Activated T-helper 2 cell treated with anti-CD3 and anti-CD28 coated beads, Interferon-gamma antibody, Interleukin-2, Interleukin-4, amounts not matched to agents 10 μg/mL and 5 μg/mL and 100 μg/mL, durations not matched to agents 14 hours and 24 hours and 36 hours (primary cell): ENCODE measurements at regions of chr1 and their contacts with region 1.

Region 1: GRCh38 chr1:243255791-243256512 is at the start of gene SDCCAG8:
- DNase-seq: peak; percentile 94
- H3K4me3 Mint-ChIP-seq: peak within 1 kb of the TSS; percentile 97
- H3K27ac Mint-ChIP-seq: peak within 1 kb of the TSS; percentile 100
- H3K4me1 Mint-ChIP-seq: peaks cover 20% of the 10 kb centered on the region
- H3K27me3 Mint-ChIP-seq: no peaks in the 10 kb centered on the region
- total RNA-seq, gene SDCCAG8: 18.1 and 25.4 TPM in 2 replicates

Region 2: GRCh38 chr1:241847796-241848685 is 1407.9 kb before region 1 on chr1 and contains the start of gene EXO1:
- intact Hi-C with region 1: loop called (anchors 5 kb)
- DNase-seq: peak; percentile 86
- H3K4me3 Mint-ChIP-seq: peak within 1 kb of the TSS; percentile 98
- H3K27ac Mint-ChIP-seq: peak within 1 kb of the TSS; percentile 100
- H3K4me1 Mint-ChIP-seq: peaks cover 26% of the 10 kb centered on the region
- H3K27me3 Mint-ChIP-seq: peaks cover 7% of the 10 kb centered on the region
- total RNA-seq, gene EXO1: 49.2 and 52.5 TPM in 2 replicates

Region 3: GRCh38 chr1:243179714-243180113 is 76.2 kb before region 1 on chr1:
- intact Hi-C with region 1: loop called (anchors 10 kb)
- DNase-seq: no peak
- H3K4me3 Mint-ChIP-seq: no peak overlapping the region
- H3K27ac Mint-ChIP-seq: peak overlapping the region; percentile 48
- H3K4me1 Mint-ChIP-seq: peaks cover 16% of the 10 kb centered on the region
- H3K27me3 Mint-ChIP-seq: no peaks in the 10 kb centered on the region

Region 4: DNA sequence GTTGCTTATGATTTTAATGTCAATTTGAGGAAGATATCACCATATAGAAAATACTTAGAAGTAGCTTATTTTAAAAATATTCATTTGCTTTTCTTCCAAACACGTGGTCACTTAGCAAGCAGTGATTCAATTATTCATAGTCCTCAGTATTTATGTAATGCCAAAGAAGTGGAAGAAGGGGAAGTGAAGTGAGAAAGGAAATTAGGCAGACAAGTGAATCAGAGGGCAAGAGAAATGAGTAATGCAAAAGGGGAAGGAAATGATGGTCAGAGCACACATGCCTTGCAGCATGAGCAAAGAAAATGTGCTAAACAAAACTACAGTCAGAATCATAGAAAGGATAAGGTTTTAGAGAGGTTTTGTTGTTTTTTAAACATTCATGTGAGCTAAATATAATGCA is 31.7 kb after region 1 on chr1:
- intact Hi-C with region 1: loop called (anchors 1 kb)
- DNase-seq: no peak
- H3K4me3 Mint-ChIP-seq: no peak overlapping the region
- H3K27ac Mint-ChIP-seq: peak overlapping the region; percentile 72
- H3K4me1 Mint-ChIP-seq: peaks cover 25% of the 10 kb centered on the region
- H3K27me3 Mint-ChIP-seq: no peaks in the 10 kb centered on the region

Region 5: DNA sequence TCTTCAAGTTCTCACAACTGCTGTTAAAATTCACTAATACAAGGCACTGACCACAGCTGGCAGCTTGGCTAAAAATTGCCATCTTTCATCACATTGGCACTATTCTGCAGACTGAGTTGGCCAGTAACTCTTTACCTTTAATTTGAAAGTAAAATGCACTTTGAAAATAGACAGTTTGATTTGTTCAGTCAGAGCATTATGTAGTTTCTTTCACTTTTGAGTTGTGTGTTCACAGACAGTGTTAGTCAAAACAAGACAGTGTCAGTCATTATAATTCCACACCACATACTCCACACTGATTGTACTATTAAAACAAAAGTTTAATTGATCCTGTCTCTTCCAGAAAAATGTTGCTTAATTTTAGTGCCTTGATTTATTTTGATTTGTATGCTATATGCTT is 160.5 kb after region 1 on chr1:
- intact Hi-C with region 1: loop called (anchors 2 kb)
- DNase-seq: no peak
- H3K4me3 Mint-ChIP-seq: peak overlapping the region; percentile 40
- H3K27ac Mint-ChIP-seq: peak overlapping the region; percentile 65
- H3K4me1 Mint-ChIP-seq: peaks cover 63% of the 10 kb centered on the region
- H3K27me3 Mint-ChIP-seq: no peaks in the 10 kb centered on the region

Region 6: DNA sequence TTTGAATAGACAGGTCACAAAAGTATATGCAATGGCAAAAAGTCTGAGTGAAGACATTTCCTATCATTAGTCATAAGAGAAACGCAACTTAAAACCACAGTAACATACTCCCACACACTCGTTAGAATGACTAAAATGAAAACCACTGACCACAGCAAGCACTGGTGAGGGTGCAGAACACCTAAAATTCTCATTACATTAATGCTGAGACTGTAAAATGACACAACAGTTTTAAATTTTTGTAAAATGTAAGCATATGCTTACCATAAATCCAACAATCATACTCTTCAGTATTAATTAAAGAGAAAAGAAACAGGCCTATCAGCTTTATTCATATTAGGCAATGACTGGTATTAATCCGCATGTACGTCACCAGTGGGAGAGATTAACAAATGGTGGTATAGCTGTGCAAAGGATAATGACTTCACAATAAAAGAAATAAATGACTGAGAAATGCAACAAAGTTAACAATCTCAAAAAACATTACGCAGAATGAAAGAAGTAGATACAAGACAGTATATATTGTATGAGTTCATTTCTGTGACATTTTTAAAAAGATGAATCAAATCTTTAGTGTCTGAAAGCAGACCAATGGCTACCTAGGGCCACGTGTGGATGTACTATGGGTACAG is 340.6 kb after region 1 on chr1:
- intact Hi-C with region 1: loop called (anchors 10 kb)
- DNase-seq: no peak
- H3K4me3 Mint-ChIP-seq: peak overlapping the region; percentile 57
- H3K27ac Mint-ChIP-seq: peak overlapping the region; percentile 86
- H3K4me1 Mint-ChIP-seq: peaks cover 48% of the 10 kb centered on the region
- H3K27me3 Mint-ChIP-seq: no peaks in the 10 kb centered on the region

Region 7: DNA sequence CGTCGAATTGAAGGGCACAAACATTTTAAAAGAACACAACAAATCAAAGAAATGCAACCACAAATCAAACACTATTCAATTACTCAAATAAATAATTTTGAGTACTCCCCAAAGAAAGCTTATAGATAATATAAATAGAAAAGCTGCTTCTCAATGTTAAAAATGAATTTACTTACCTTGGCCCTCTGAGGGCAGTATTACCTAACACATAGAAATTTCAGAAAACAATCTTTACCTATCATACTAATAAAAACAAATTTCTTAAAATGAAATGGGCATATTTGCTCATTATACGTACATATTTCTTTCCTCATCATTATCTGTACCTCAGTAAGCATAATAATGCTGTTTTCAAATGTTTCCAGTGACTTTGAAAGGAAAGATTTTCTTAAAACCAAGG is 452.3 kb after region 1 on chr1:
- intact Hi-C with region 1: no loop called
- DNase-seq: no peak
- H3K4me3 Mint-ChIP-seq: no peak overlapping the region
- H3K27ac Mint-ChIP-seq: no peak overlapping the region
- H3K4me1 Mint-ChIP-seq: peaks cover 8% of the 10 kb centered on the region
- H3K27me3 Mint-ChIP-seq: no peaks in the 10 kb centered on the region

Region 8: GRCh38 chr1:244451951-244452795 is 1196.2 kb after region 1 on chr1:
- intact Hi-C with region 1: loop called (anchors 1 kb)
- DNase-seq: peak; percentile 98
- H3K4me3 Mint-ChIP-seq: peak overlapping the region; percentile 95
- H3K27ac Mint-ChIP-seq: peak overlapping the region; percentile 96
- H3K4me1 Mint-ChIP-seq: peaks cover 34% of the 10 kb centered on the region
- H3K27me3 Mint-ChIP-seq: no peaks in the 10 kb centered on the region